Activated CD4-positive, alpha-beta T cell treated with anti-CD3 and anti-CD28 coated beads for 36 hours (primary cell): ENCODE measurements at regions of chr2 and their contacts with region 1.

Region 1: GRCh38 chr2:54723131-54723995 is at the start of gene EML6:
- DNase-seq: peak; percentile 99
- ATAC-seq: peak; percentile 99
- H3K4me3 Mint-ChIP-seq: peak within 1 kb of the TSS; percentile 80
- H3K27ac Mint-ChIP-seq: peak within 1 kb of the TSS; percentile 65
- H3K4me1 Mint-ChIP-seq: peaks cover 12% of the 10 kb centered on the region
- H3K27me3 Mint-ChIP-seq: peaks cover 44% of the 10 kb centered on the region
- total RNA-seq, gene EML6: 0.16 to 0.30 TPM

Region 2: DNA sequence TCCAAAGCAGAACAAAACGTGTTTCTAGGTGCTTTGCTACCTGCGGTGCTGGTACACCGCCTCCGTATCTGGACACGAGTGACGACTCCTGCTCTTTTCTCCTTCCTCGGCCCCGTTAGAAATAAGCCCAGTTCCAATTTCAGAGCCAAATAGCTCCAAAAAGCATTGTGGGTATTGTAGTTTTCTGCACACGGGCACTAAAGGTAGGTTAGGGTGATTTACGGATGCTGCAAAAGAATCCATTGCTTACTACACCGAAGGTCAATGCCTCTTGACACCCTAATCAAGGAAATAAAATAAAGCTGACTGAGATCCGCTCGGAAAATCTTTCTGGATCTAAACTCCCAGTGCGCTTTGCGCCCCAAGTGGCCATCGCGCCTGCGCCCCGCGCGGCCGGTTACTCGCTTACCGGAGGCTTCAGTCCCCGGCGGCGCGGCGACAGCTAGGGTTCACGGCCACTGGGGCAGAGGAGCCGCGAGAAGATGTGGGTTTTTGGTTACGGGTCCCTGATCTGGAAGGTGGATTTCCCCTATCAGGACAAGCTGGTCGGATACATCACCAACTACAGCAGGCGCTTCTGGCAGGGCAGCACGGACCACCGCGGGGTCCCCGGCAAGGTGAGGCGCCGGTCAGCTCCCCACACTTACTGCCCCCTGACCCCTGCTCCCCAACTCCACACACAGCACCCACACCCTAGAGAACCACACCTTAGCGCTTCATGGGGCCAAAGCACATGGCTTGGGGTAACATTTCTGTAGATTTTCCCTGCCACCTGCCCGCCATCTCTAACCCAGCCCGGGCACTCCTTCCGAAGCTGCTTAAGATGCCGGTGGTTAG is 955.7 kb before region 1 on chr2 and contains the start of gene CHAC2:
- CTCF ChIA-PET with region 1: no interaction called
- POLR2A ChIA-PET with region 1: no interaction called
- intact Hi-C with region 1: loop called in 1 of 2 experiments (anchors 10 kb)
- DNase-seq: peak; percentile 94
- ATAC-seq: peak; percentile 96
- H3K4me3 Mint-ChIP-seq: peak within 1 kb of the TSS; percentile 91
- H3K27ac Mint-ChIP-seq: peak within 1 kb of the TSS; percentile 96
- H3K4me1 Mint-ChIP-seq: peaks cover 26% of the 10 kb centered on the region
- H3K27me3 Mint-ChIP-seq: no peaks in the 10 kb centered on the region
- total RNA-seq, gene CHAC2: 15.8 to 17.4 TPM

Region 3: DNA sequence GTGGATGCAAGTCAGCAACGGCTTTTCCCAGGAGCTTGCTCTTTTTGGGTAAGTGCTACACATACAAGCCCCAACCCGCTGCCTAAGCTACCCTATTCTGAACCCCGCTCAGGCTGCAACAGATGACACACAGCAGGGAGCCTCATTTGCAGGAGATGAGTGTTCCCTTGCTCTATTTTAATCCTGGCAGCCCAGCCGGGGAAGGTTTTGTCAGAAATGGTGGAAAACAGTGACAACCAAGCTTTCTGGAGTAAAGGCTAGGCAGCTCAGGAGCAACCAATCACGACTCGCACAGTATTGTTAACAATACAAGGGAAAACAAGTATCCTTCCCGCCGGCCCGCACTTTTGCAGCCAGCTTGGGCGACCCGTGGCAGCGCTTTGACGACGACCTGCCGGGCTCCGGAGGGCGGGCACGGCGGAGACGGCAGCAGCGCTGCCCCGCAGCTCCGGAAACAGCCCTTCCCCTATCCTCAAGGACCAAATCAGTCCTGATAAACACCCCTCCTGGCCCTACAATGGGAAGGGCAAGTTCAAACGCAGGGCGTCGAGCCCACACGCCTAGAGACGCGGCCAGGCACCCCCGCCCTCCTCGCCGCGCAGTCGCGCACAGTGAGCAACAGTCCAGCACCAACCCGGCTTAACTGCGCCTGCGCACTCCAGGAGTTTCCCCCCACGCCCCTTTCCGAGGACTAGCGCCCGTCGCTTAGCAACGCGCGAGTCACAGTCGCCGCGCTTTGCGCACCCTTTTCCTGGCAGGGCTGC is 393.0 kb before region 1 on chr2:
- CTCF ChIA-PET with region 1: no interaction called
- POLR2A ChIA-PET with region 1: no interaction called
- intact Hi-C with region 1: loop called in 1 of 2 experiments (anchors 2 kb)
- DNase-seq: peak; percentile 94
- ATAC-seq: peak; percentile 99
- H3K4me3 Mint-ChIP-seq: peak overlapping the region; percentile 72
- H3K27ac Mint-ChIP-seq: peak overlapping the region; percentile 44
- H3K4me1 Mint-ChIP-seq: peaks cover 15% of the 10 kb centered on the region
- H3K27me3 Mint-ChIP-seq: peaks cover 15% of the 10 kb centered on the region

Region 4: DNA sequence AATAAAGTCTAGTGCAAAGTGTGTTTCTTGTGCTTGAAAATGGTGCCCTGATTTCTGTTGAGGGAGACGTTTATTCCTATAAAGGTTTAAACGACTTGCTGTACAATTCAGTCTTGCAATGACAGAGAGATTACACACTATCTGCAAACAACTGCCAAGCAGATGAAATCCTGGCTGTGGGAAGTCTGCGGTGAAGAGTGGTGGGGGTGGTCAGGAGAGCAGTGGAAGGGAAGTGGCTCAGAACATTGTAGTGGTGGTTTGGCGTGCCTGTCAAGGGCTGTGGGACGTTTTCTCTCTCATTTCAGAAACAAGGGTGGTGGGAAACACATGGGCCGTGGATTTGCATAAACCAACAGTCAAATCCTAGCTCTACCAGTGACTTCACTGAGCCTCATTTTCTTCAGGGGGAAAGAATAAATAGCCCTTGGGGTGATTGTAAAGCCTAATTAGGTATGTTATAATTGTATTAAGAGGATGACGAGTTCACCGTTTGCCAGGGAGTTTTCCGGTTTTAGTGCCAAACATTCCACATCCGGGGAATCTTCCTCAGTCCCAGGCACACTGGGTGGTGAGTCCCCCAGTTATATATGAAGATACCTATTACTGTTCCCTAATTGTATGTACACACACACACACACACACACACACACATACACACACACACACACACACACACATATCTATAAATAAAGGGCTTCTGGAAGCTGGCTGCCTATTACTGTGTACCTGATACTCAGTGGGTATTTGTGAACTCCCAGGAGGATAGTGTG is 152.3 kb before region 1 on chr2:
- CTCF ChIA-PET with region 1: no interaction called
- POLR2A ChIA-PET with region 1: no interaction called
- intact Hi-C with region 1: loop called in 1 of 2 experiments (anchors 1 kb)
- DNase-seq: peak; percentile 90
- ATAC-seq: peak; percentile 50
- H3K4me3 Mint-ChIP-seq: peak overlapping the region; percentile 65
- H3K27ac Mint-ChIP-seq: peak overlapping the region; percentile 99
- H3K4me1 Mint-ChIP-seq: peaks cover 90% of the 10 kb centered on the region
- H3K27me3 Mint-ChIP-seq: no peaks in the 10 kb centered on the region

Region 5: GRCh38 chr2:54589340-54590215 is 133.8 kb before region 1 on chr2:
- CTCF ChIA-PET with region 1: no interaction called
- POLR2A ChIA-PET with region 1: no interaction called
- intact Hi-C with region 1: no loop called
- DNase-seq: peak; percentile 66
- ATAC-seq: peak; percentile 71
- H3K4me3 Mint-ChIP-seq: peak overlapping the region; percentile 53
- H3K27ac Mint-ChIP-seq: peak overlapping the region; percentile 93
- H3K4me1 Mint-ChIP-seq: peaks cover 84% of the 10 kb centered on the region
- H3K27me3 Mint-ChIP-seq: no peaks in the 10 kb centered on the region

Region 6: DNA sequence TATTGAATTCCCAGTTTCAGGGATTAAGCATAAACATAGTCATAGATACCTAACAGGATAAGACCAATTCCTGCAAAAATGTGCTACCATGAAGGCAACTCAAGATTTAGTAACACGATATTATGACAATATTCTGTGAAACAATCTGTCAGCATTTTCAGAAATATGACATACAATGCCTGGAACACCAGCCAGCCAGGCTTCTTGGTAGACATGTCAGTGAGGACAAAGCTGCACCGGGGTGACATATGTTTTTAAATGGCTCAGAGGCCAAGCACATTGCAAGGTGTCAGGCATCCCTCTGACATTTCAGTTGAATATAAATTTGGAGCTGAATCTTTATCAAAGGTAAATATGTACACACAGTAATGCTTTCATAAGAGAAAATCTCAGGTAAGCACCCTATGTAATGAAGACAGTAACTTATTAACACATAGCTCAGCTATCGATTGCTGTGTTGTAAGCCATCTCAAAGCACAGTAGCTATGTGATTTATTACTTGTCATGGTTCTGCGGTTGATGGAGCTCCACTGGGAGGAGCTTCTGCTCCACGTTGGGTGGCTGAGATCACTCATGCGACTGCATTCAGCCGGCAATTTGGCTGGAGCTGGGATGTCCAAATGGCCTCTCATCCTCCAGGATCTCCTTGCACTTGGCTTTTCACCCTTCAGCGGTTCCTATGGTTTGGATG is 31.8 kb before region 1 on chr2:
- CTCF ChIA-PET with region 1: no interaction called
- POLR2A ChIA-PET with region 1: no interaction called
- intact Hi-C with region 1: no loop called
- DNase-seq: no peak
- ATAC-seq: no peak
- H3K4me3 Mint-ChIP-seq: no peak overlapping the region
- H3K27ac Mint-ChIP-seq: no peak overlapping the region
- H3K4me1 Mint-ChIP-seq: peaks cover 8% of the 10 kb centered on the region
- H3K27me3 Mint-ChIP-seq: peaks cover 27% of the 10 kb centered on the region

Region 7: GRCh38 chr2:54775710-54776109 is 52.3 kb after region 1 on chr2:
- CTCF ChIA-PET with region 1: no interaction called
- POLR2A ChIA-PET with region 1: no interaction called
- intact Hi-C with region 1: no loop called
- DNase-seq: no peak
- ATAC-seq: no peak
- H3K4me3 Mint-ChIP-seq: no peak overlapping the region
- H3K27ac Mint-ChIP-seq: no peak overlapping the region
- H3K4me1 Mint-ChIP-seq: peaks cover 4% of the 10 kb centered on the region
- H3K27me3 Mint-ChIP-seq: no peaks in the 10 kb centered on the region

Region 8: DNA sequence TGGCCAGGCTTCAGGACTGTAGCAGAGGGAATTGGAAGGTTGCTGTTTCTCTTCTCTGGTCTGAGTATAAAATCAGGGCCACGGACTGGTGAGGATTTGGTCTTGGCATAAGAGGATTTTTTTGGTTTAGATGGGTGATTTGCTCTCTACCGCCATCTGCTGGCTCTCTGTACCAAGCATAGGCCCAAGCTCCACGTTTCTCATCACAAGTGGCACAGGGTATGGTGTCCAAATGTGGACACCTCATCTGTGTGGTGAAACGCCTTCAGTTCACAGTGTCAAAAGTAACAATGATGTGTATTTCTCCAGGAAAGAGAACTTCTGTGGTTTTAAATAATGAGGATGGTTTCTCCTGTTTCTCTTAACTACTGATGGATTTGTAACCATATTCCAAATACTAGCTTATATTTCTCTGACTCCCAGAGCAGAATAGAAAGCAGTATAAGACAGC is 115.2 kb after region 1 on chr2:
- CTCF ChIA-PET with region 1: interaction called, 6 read pairs
- POLR2A ChIA-PET with region 1: no interaction called
- intact Hi-C with region 1: loop called (anchors 1 to 5 kb)
- DNase-seq: peak; percentile 79
- ATAC-seq: peak; percentile 97
- H3K4me3 Mint-ChIP-seq: no peak overlapping the region
- H3K27ac Mint-ChIP-seq: no peak overlapping the region
- H3K4me1 Mint-ChIP-seq: no peaks in the 10 kb centered on the region
- H3K27me3 Mint-ChIP-seq: no peaks in the 10 kb centered on the region

Region 9: DNA sequence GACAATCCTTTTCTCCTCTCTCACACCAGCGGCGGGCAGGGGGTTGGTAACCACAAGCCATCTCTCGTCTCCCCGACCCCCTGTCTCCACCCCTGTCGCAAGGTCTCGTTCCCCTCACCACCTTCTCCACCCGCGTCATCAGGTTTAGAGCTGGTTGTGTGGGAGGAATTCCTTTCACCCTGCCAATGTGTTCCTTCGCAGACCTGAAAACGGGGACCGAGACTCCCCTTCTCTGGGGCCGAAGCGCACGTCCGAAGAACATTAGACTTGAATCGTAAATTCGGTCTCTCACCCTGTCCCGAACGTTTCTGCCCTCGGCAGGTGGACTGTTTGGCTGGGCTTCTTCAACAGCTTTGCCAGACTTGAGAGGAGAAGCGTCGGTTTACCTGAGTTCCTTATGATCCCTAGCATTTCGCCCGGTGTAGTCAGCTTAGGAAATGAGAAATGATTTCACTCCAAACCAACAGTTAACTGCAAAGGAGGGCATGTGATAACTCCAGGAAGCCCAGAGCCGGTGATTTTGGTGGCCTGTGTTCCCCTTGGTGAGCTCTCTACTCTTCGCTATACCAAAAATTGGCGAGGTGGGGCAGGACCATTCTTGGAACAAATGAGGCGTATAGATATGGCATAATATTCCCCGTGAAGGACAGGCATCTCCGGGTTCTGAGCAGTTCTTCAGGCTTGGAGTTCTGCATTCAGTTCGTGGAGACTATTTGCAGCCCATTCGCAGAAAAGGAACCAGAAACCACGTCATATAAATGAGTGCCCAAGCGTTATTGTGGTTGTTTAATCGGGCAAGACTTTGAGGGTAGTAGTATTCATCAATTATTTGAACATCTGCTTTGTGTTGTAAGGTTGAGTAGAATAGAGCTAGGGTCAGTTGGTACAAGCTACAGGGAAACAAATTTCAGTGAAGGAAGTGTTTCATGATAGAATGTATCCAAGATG is 796.8 kb after region 1 on chr2:
- CTCF ChIA-PET with region 1: no interaction called
- POLR2A ChIA-PET with region 1: no interaction called
- intact Hi-C with region 1: loop called in 1 of 2 experiments (anchors 2 kb)
- DNase-seq: peak; percentile 52
- ATAC-seq: peak; percentile 25
- H3K4me3 Mint-ChIP-seq: peak overlapping the region; percentile 99
- H3K27ac Mint-ChIP-seq: peak overlapping the region; percentile 90
- H3K4me1 Mint-ChIP-seq: peaks cover 8% of the 10 kb centered on the region
- H3K27me3 Mint-ChIP-seq: no peaks in the 10 kb centered on the region